Activated naive CD4-positive, alpha-beta T cell treated with anti-CD3 and anti-CD28 coated beads for 36 hours (primary cell): ENCODE measurements at regions of chr10 and their contacts with region 1.

Region 1: GRCh38 chr10:61987951-61988379 is 86.5 kb downstream of the ARID5B start:
- DNase-seq: peak; percentile 64
- H3K4me3 Mint-ChIP-seq: peak overlapping the region; percentile 51
- H3K27ac Mint-ChIP-seq: peak overlapping the region; percentile 96
- H3K4me1 Mint-ChIP-seq: peaks cover 89% of the 10 kb centered on the region
- H3K27me3 Mint-ChIP-seq: no peaks in the 10 kb centered on the region

Region 2: GRCh38 chr10:61943674-61944410 is 44.1 kb before region 1 on chr10:
- CTCF ChIA-PET with region 1: interaction called, 5 read pairs
- intact Hi-C with region 1: loop called (anchors 1 kb)
- DNase-seq: peak; percentile 47
- H3K4me3 Mint-ChIP-seq: peak overlapping the region; percentile 62
- H3K27ac Mint-ChIP-seq: peak overlapping the region; percentile 98
- H3K4me1 Mint-ChIP-seq: peaks cover 71% of the 10 kb centered on the region
- H3K27me3 Mint-ChIP-seq: no peaks in the 10 kb centered on the region

Region 3: DNA sequence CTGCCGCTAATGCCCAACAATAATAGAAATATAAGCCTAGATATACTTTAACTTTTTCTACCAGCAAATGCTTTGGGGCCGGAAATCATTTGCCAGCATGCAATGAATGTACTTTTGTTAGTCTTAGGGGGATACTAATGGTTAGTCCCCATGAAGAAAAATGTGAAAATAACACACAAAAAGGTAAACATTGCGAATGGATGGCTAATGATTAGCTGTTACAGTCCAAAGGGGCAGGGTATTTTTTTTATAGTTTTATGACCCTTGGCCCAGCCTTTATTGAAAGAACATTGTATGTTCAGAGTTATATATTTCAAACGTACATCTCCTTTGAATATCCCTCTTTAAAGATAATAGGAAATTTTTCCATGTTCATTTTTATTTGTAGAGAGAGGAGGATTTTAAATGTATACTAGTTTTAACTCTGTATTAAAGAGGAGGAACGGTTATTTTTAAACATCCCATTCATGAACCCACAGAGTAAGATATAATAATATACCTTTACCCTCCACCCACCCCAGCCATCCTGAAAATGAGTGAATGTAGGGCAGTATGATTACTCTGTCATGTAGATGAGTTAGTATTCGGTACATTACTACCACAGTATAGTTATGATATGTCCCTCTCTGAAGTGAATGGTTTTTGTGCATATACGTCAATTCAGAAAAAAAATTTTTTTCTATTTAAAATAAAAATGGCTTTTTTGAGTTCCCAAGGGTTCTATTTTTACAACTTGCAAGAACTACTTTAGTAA is 22.8 kb before region 1 on chr10:
- CTCF ChIA-PET with region 1: no interaction called
- intact Hi-C with region 1: loop called (anchors 1 kb)
- DNase-seq: no peak
- H3K4me3 Mint-ChIP-seq: no peak overlapping the region
- H3K27ac Mint-ChIP-seq: peak overlapping the region; percentile 87
- H3K4me1 Mint-ChIP-seq: peaks cover 90% of the 10 kb centered on the region
- H3K27me3 Mint-ChIP-seq: no peaks in the 10 kb centered on the region